ENCODE measurements at regions of chr6 and their contacts with region 1.

Region 1: GRCh38 chr6:82270881-82271645 is 23.5 kb upstream of the IBTK start:
- DNase-seq: peak in 1 of 2 donors; percentile 60
- ATAC-seq: peak; percentile 40 to 66 (median 64)
- H3K4me3 ChIP-seq: no peak overlapping the region
- H3K4me3 Mint-ChIP-seq: no peak overlapping the region
- H3K27ac ChIP-seq: no peak overlapping the region
- H3K27ac Mint-ChIP-seq: no peak overlapping the region
- H3K4me1 ChIP-seq: no peaks in the 10 kb centered on the region
- H3K4me1 Mint-ChIP-seq: no peaks in the 10 kb centered on the region
- H3K27me3 ChIP-seq: no peaks in the 10 kb centered on the region
- H3K27me3 Mint-ChIP-seq: peaks cover 0 to 3% of the 10 kb centered on the region in 2 donors
- CTCF ChIP-seq: peak; percentile 74

Region 2: GRCh38 chr6:82247634-82248232 is 23.3 kb before region 1 on chr6 and contains the start of gene IBTK:
- intact Hi-C with region 1: no loop called
- DNase-seq: peak; percentile 92 to 94
- ATAC-seq: peak; percentile 89 to 94 (median 93)
- H3K4me3 ChIP-seq: peak within 1 kb of the TSS; percentile 73
- H3K4me3 Mint-ChIP-seq: peak within 1 kb of the TSS; percentile 97
- H3K27ac ChIP-seq: peak within 1 kb of the TSS; percentile 70
- H3K27ac Mint-ChIP-seq: peak within 1 kb of the TSS; percentile 94 to 97
- H3K4me1 ChIP-seq: peaks cover 18% of the 10 kb centered on the region
- H3K4me1 Mint-ChIP-seq: peaks cover 32 to 40% of the 10 kb centered on the region in 2 donors
- H3K27me3 ChIP-seq: no peaks in the 10 kb centered on the region
- H3K27me3 Mint-ChIP-seq: no peaks in the 10 kb centered on the region
- CTCF ChIP-seq: no peak
- total RNA-seq, gene IBTK: 18.3 to 23.5 (median 22.2) TPM

Region 3: GRCh38 chr6:82331031-82331773 is 60.1 kb after region 1 on chr6:
- intact Hi-C with region 1: no loop called
- DNase-seq: no peak
- ATAC-seq: no peak
- H3K4me3 ChIP-seq: no peak overlapping the region
- H3K4me3 Mint-ChIP-seq: no peak overlapping the region
- H3K27ac ChIP-seq: no peak overlapping the region
- H3K27ac Mint-ChIP-seq: no peak overlapping the region
- H3K4me1 ChIP-seq: no peaks in the 10 kb centered on the region
- H3K4me1 Mint-ChIP-seq: no peaks in the 10 kb centered on the region
- H3K27me3 ChIP-seq: no peaks in the 10 kb centered on the region
- H3K27me3 Mint-ChIP-seq: peaks cover 0 to 4% of the 10 kb centered on the region in 2 donors
- CTCF ChIP-seq: no peak

Region 4: GRCh38 chr6:83055366-83055964 is 784.4 kb after region 1 on chr6:
- intact Hi-C with region 1: loop called (anchors 1 kb)
- DNase-seq: peak in 1 of 2 donors; percentile 65
- ATAC-seq: peak; percentile 68 to 73 (median 71)
- H3K4me3 ChIP-seq: no peak overlapping the region
- H3K4me3 Mint-ChIP-seq: no peak overlapping the region
- H3K27ac ChIP-seq: no peak overlapping the region
- H3K27ac Mint-ChIP-seq: no peak overlapping the region
- H3K4me1 ChIP-seq: no peaks in the 10 kb centered on the region
- H3K4me1 Mint-ChIP-seq: no peaks in the 10 kb centered on the region
- H3K27me3 ChIP-seq: no peaks in the 10 kb centered on the region
- H3K27me3 Mint-ChIP-seq: no peaks in the 10 kb centered on the region
- CTCF ChIP-seq: peak; percentile 86